Posterior vena cava (tissue), 2 donors: ENCODE measurements at regions of chr16 and their contacts with region 1.

Region 1: GRCh38 chr16:81616321-81617055 is 162.6 kb upstream of the PLCG2 start:
- DNase-seq: no peak

Region 2: DNA sequence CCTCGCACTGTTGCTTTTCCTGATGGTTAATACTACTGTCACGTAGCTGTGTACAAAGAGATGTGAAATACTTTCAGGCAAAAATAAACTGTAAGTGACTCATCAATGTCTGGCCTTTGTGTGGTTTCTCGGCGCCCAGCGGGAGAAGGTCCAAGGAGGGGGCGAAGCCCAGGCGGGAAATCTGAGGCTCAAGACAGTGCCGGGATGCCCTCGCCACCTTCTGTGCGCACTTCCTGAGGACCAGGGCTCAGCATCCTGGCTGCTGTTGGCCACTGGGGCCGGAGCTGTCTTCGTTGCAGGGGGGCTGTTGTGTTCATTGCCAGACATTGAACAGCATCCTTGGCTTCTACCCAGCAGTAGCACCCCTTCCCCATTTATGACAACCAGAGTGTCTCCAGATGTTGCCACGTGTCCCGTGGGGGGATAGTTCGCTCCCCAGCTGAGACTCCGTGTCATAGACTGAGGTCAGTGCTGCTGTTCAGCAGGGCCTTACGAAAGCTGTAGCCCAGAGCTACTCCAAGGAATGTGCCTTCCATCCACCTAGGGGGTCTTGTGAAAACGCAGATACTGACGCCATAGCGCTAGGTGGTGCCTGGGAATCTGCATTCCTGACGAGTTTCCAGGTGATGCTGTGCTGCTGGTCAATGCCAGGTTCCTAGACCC is 95.3 kb after region 1 on chr16:
- intact Hi-C with region 1: loop called in 1 of 2 experiments (anchors 10 kb)
- DNase-seq: peak; percentile 91